ENCODE measurements at regions of chr16 and their contacts with region 1.

Region 1: DNA sequence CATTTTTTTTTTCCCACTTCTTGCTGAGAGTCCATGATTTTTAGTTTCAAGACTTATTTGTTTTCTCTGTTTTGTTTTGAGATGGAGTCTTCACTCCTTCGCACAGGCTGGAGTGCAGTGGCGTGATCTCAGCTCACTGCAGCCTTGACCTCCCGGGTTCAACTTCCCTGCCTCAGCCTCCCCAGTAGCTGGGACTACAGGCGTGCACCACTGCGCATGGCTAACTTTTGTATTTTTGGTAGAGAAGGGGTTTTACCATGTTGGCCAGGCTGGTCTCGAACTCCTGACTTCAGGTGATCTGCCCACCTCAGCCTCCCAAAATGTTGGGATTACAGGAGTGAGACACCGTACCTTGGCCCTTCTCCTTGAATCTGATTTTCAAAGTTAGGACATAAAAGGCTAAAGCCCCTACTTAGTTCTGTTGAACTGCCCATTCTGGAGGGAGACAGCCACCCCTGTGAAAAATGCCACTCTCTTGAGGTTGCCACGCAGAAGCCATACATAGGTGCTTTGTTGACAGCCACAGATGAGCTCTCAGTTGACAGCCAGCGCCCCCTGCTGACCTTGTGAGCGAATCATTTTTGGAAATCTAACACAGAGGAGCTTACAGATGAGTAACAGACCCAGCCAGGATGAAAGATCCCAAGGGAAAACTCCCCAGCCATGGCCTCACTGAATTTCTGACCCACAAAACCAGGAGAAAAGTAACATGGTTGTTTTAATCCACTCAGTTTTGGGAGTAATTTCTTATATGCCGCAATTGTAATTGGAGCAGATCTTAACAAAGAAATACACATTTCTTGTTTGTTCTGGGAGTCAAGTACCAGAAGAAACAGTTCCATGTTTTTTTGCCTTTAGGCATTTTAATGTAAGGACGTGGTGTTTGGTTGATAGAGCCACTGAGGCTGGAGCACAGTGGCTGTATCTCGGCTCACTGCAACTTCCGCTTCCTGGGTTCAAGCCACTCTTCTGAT is 38.8 kb downstream of the PKD1L3 start:
- DNase-seq: peak; percentile 91
- ATAC-seq: peak; percentile 96
- H3K4me3 ChIP-seq: no peak overlapping the region
- H3K27ac ChIP-seq: no peak overlapping the region
- H3K4me1 ChIP-seq: peaks cover 40% of the 10 kb centered on the region
- H3K27me3 ChIP-seq: no peaks in the 10 kb centered on the region
- CTCF ChIP-seq: peak; percentile 95
- EP300 ChIP-seq: no peak
- POLR2A ChIP-seq: no peak
- RAD21 ChIP-seq: peak; percentile 88

Region 2: DNA sequence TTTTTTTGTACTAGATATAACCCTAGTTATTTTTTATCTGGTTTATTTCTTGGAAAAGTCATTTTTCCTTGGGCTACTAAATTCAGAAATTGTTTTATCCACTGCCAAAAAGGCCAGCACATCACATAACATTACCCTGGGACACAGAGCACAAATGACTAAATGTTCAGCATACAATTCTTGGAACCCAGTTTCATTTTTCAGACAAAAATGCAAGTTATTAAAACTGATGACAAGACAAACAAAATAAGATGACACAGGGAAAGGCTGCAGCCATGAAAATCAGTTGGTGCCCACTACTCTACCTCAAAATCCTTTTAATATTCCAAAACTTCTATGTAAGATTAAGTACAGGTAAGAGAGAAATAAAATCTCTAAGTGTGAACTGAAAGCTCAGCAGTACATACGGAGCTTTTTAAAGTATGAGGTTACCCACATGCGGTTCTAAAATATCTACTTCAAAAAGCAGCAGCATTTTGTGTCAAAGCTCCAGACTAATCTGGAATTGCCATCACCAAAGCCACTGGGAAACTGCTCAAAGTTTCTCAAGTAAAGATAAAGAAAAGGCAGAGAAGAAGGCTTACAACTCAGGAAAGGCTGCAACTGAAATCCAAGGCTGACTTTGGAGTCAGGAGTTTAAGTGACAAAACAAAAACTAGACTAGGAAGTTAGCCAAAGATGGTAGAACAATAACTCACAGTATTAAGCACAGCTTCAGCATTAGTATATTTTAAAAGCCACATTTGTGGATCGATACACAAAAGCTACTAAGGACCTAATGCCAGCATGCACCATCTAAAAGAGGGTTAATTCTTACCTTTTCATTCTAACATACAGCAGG is 194.1 kb before region 1 on chr16:
- CTCF ChIA-PET with region 1: no interaction called
- POLR2A ChIA-PET with region 1: no interaction called
- in situ Hi-C with region 1: no loop called
- intact Hi-C with region 1: loop called (anchors 5 kb)
- DNase-seq: no peak
- ATAC-seq: no peak
- H3K4me3 ChIP-seq: no peak overlapping the region
- H3K27ac ChIP-seq: no peak overlapping the region
- H3K4me1 ChIP-seq: no peaks in the 10 kb centered on the region
- H3K27me3 ChIP-seq: no peaks in the 10 kb centered on the region
- CTCF ChIP-seq: no peak
- EP300 ChIP-seq: no peak
- POLR2A ChIP-seq: no peak
- RAD21 ChIP-seq: no peak

Region 3: GRCh38 chr16:71883849-71884638 is 77.3 kb before region 1 on chr16 and contains the start of gene ZNF821:
- CTCF ChIA-PET with region 1: interaction called, 5 read pairs
- POLR2A ChIA-PET with region 1: no interaction called
- in situ Hi-C with region 1: no loop called
- intact Hi-C with region 1: loop called (anchors 1 kb)
- DNase-seq: peak; percentile 66
- ATAC-seq: peak; percentile 85
- H3K4me3 ChIP-seq: peak within 1 kb of the TSS; percentile 77 to 99 (median 95)
- H3K27ac ChIP-seq: peak within 1 kb of the TSS; percentile 73
- H3K4me1 ChIP-seq: peaks cover 28% of the 10 kb centered on the region
- H3K27me3 ChIP-seq: no peaks in the 10 kb centered on the region
- CTCF ChIP-seq: peak; percentile 62
- EP300 ChIP-seq: no peak
- POLR2A ChIP-seq: peak in 1 of 2 experiments; percentile 56; a peak in 3 of 4 replicates
- RAD21 ChIP-seq: peak; percentile 90
- total RNA-seq, gene ZNF821: 6.0 and 7.0 TPM in 2 replicates

Region 4: GRCh38 chr16:71894921-71895678 is 66.3 kb before region 1 on chr16 and contains the start of gene IST1:
- CTCF ChIA-PET with region 1: no interaction called
- POLR2A ChIA-PET with region 1: interaction called, 3 read pairs
- in situ Hi-C with region 1: no loop called
- intact Hi-C with region 1: loop called (anchors 2 kb)
- DNase-seq: peak; percentile 96
- ATAC-seq: peak; percentile 91
- H3K4me3 ChIP-seq: peak within 1 kb of the TSS; percentile 85 to 98 (median 95)
- H3K27ac ChIP-seq: peak within 1 kb of the TSS; percentile 95
- H3K4me1 ChIP-seq: peaks cover 57% of the 10 kb centered on the region
- H3K27me3 ChIP-seq: no peaks in the 10 kb centered on the region; a peak in 1 of 5 replicates
- CTCF ChIP-seq: peak; percentile 23; the same call in 1 of the 2 replicates
- EP300 ChIP-seq: peak; percentile 27 to 54; a peak in 3 of 4 replicates
- POLR2A ChIP-seq: peak; percentile 94 to 95
- RAD21 ChIP-seq: peak; percentile 59
- total RNA-seq, gene IST1: 346 and 497 TPM in 2 replicates

Region 5: DNA sequence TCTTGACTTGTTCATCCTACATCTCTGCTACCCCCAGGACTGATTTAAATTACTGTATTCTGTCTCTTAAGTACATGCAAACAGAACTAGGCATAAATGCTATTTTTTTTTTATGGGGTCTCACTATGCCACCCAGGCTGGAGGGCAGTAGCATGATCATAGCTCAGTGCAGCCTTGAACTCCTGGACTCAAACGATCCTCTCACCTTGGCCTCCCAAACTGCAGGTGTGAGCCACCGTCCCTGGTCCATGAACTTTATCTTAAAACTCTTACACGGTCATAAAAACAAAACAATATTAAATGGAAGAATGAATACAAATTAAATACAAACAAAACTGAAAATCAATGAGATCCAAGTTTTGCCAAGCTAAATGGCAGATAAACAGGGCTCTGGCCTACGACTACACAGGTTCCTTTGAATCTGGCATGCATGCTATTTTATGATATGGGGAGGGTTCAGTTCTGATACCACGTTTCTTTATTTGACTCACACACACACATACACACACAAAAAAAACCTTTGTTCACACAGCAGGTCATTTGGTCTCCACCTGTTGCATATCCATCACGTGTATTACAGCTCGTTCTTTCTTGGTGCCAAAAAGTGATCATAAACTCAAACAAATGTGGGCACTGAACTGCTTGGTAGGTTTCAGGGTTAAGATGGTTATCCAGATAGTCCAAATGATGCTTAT is 40.0 kb after region 1 on chr16:
- CTCF ChIA-PET with region 1: no interaction called
- POLR2A ChIA-PET with region 1: no interaction called
- in situ Hi-C with region 1: no loop called
- intact Hi-C with region 1: loop called (anchors 5 kb)
- DNase-seq: no peak
- ATAC-seq: peak; percentile 35
- H3K4me3 ChIP-seq: peak overlapping the region in 1 of 3 experiments; percentile 2; a peak in 2 of 6 replicates
- H3K27ac ChIP-seq: no peak overlapping the region
- H3K4me1 ChIP-seq: peaks cover 50% of the 10 kb centered on the region
- H3K27me3 ChIP-seq: no peaks in the 10 kb centered on the region
- CTCF ChIP-seq: no peak
- EP300 ChIP-seq: no peak
- POLR2A ChIP-seq: no peak
- RAD21 ChIP-seq: no peak

Region 6: DNA sequence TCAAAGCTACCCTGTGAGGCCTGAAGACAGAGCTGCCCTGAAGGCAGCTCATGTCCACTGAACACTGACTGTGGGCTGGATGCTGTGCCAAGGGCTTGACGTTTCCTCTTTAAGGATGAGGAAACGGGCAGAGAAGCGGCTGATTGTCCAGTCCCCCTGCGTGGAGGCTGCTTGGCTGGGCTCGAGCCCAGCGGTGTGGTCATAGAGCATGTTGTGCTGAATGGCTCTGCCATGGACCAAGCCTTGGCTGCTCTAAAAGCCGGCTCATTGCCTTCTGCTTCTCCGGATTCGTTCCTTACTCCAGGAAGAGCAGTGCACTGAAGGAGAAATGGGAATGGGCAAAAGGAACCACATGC is 64.4 kb after region 1 on chr16:
- CTCF ChIA-PET with region 1: no interaction called
- POLR2A ChIA-PET with region 1: no interaction called
- in situ Hi-C with region 1: no loop called
- intact Hi-C with region 1: no loop called
- DNase-seq: no peak
- ATAC-seq: peak; percentile 7; the same call in 2 of the 3 replicates
- H3K4me3 ChIP-seq: no peak overlapping the region
- H3K27ac ChIP-seq: peak overlapping the region; percentile 2
- H3K4me1 ChIP-seq: peaks cover 66% of the 10 kb centered on the region
- H3K27me3 ChIP-seq: no peaks in the 10 kb centered on the region
- CTCF ChIP-seq: no peak
- EP300 ChIP-seq: no peak
- POLR2A ChIP-seq: no peak
- RAD21 ChIP-seq: no peak

Region 7: DNA sequence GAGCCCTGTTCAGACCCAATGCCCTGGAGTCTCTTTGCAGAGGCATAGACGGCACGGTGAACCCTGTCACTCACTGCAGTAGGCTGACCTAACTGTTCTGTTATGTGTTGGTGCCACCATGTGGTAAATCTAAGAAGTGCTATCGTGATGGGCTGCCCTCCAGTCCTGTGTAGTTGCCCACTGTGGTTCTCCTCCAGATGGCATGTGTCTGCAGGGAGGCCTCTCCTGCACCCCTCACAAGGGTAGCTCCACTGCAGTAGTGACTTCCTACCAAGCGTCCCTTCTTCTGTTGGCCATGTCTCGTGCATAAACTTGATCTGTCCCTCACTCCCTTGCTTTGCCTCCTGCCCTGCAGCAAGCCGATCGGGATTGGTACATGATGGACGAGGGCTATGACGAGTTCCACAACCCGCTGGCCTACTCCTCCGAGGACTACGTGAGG is 138.0 kb after region 1 on chr16:
- CTCF ChIA-PET with region 1: no interaction called
- POLR2A ChIA-PET with region 1: no interaction called
- in situ Hi-C with region 1: no loop called
- intact Hi-C with region 1: loop called (anchors 5 kb)
- DNase-seq: peak; percentile 81
- ATAC-seq: peak; percentile 94
- H3K4me3 ChIP-seq: no peak overlapping the region
- H3K27ac ChIP-seq: no peak overlapping the region
- H3K4me1 ChIP-seq: peaks cover 23% of the 10 kb centered on the region
- H3K27me3 ChIP-seq: no peaks in the 10 kb centered on the region; a peak in 1 of 5 replicates
- CTCF ChIP-seq: peak; percentile 95
- EP300 ChIP-seq: no peak
- POLR2A ChIP-seq: peak; percentile 32 to 46; a peak in 2 of 4 replicates
- RAD21 ChIP-seq: peak; percentile 98